ENCODE measurements at regions of chr1 and their contacts with region 1.

Region 1: GRCh38 chr1:175742790-175743459 is 470 bp downstream of the TNR start:
- DNase-seq: peak in 1 of 2 experiments; percentile 59
- H3K4me3 ChIP-seq: peak overlapping the region; percentile 12 to 31 (median 18); a peak in 6 of 8 replicates
- H3K27ac ChIP-seq: no peak overlapping the region
- H3K4me1 ChIP-seq: peaks cover 0 to 7% (median 3%) of the 10 kb centered on the region in 4 experiments; a peak in 3 of 7 replicates
- H3K27me3 ChIP-seq: peaks cover 0 to 6% (median 0%) of the 10 kb centered on the region in 4 experiments; a peak in 2 of 7 replicates
- CTCF ChIP-seq: no peak
- EP300 ChIP-seq: no peak
- POLR2A ChIP-seq: no peak
- RAD21 ChIP-seq: peak in 1 of 2 experiments; percentile 31; a peak in 1 of 4 replicates

Region 2: DNA sequence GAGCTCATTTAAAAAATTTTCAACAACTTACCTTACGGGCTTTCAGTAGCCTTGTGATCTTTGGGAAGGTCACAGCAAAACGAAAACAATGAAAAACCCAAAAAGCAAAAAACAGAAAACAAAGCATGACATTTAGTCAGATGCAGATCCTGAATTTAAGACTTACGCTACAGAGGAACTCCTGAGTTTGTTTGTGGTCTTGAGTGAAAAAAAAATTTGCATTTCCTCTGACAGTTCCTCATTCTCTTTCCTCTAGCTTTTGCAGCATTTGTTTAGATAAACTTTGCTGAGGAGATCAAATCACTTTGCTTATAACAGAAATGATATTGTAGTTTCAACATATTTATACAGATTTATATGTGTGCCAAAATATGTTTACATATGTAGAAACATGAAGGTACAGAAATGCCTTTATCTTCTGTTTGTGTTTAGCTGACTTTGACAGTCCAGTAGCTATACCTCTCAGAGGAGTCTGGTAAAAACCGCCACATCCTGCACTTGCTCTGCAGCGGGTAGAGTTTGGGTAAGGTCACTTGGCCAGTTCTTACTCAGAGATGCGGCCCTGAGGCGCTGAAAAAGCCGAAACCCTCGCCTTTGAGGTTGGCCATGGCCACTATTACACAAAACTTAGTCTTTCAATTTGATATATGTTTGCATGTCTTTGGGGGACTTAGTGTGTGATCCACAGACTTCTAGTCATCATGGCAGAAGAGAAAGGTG is 142.0 kb before region 1 on chr1:
- CTCF ChIA-PET with region 1: interaction called, 12 read pairs
- POLR2A ChIA-PET with region 1: no interaction called
- DNase-seq: no peak
- H3K4me3 ChIP-seq: no peak overlapping the region
- H3K27ac ChIP-seq: no peak overlapping the region
- H3K4me1 ChIP-seq: peaks cover 0 to 3% (median 2%) of the 10 kb centered on the region in 4 experiments; a peak in 4 of 7 replicates
- H3K27me3 ChIP-seq: peaks cover 2 to 20% (median 13%) of the 10 kb centered on the region in 4 experiments
- CTCF ChIP-seq: no peak
- EP300 ChIP-seq: no peak
- POLR2A ChIP-seq: no peak
- RAD21 ChIP-seq: no peak

Region 3: GRCh38 chr1:175673371-175674150 is 69.4 kb before region 1 on chr1:
- CTCF ChIA-PET with region 1: interaction called, 17 read pairs
- POLR2A ChIA-PET with region 1: no interaction called
- DNase-seq: no peak
- H3K4me3 ChIP-seq: no peak overlapping the region
- H3K27ac ChIP-seq: no peak overlapping the region
- H3K4me1 ChIP-seq: peaks cover 0 to 3% (median 0%) of the 10 kb centered on the region in 4 experiments; a peak in 2 of 7 replicates
- H3K27me3 ChIP-seq: no peaks in the 10 kb centered on the region; a peak in 1 of 7 replicates
- CTCF ChIP-seq: no peak
- EP300 ChIP-seq: no peak
- POLR2A ChIP-seq: no peak
- RAD21 ChIP-seq: no peak

Region 4: GRCh38 chr1:175717610-175718540 is 25.1 kb before region 1 on chr1:
- CTCF ChIA-PET with region 1: interaction called, 44 read pairs
- POLR2A ChIA-PET with region 1: no interaction called
- DNase-seq: no peak
- H3K4me3 ChIP-seq: no peak overlapping the region
- H3K27ac ChIP-seq: no peak overlapping the region
- H3K4me1 ChIP-seq: peaks cover 0 to 2% (median 0%) of the 10 kb centered on the region in 4 experiments; a peak in 2 of 7 replicates
- H3K27me3 ChIP-seq: no peaks in the 10 kb centered on the region; a peak in 2 of 7 replicates
- CTCF ChIP-seq: no peak
- EP300 ChIP-seq: no peak
- POLR2A ChIP-seq: no peak
- RAD21 ChIP-seq: no peak

Region 5: GRCh38 chr1:175768610-175769009 is 25.7 kb after region 1 on chr1:
- CTCF ChIA-PET with region 1: interaction called, 277 read pairs
- POLR2A ChIA-PET with region 1: no interaction called
- DNase-seq: no peak
- H3K4me3 ChIP-seq: no peak overlapping the region
- H3K27ac ChIP-seq: no peak overlapping the region
- H3K4me1 ChIP-seq: no peaks in the 10 kb centered on the region
- H3K27me3 ChIP-seq: no peaks in the 10 kb centered on the region; a peak in 1 of 7 replicates
- CTCF ChIP-seq: no peak
- EP300 ChIP-seq: no peak
- POLR2A ChIP-seq: no peak
- RAD21 ChIP-seq: no peak

Region 6: DNA sequence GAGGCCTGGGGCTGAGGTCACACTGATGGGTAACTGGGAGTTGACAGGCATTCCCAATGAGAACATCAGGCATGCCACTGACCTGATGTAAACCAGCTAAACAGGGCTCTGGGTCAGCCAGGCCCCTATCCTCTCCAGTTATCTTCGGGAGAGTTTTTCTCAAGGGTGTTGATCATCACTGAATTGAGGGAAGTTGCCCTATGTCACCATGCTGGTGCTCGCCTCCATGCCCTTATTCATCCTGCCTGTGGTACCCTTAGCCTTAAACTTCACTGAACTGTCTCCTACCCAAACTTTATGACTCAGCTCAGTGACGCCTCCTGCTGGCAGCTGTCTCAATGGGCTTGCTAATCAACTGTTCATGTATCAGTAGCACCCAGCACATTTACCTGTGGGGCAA is 81.2 kb after region 1 on chr1:
- CTCF ChIA-PET with region 1: interaction called, 32 read pairs
- POLR2A ChIA-PET with region 1: no interaction called
- DNase-seq: peak; percentile 50 to 90
- H3K4me3 ChIP-seq: no peak overlapping the region
- H3K27ac ChIP-seq: no peak overlapping the region
- H3K4me1 ChIP-seq: peaks cover 0 to 1% (median 0%) of the 10 kb centered on the region in 4 experiments; a peak in 1 of 7 replicates
- H3K27me3 ChIP-seq: no peaks in the 10 kb centered on the region
- CTCF ChIP-seq: peak; percentile 61 to 92 (median 83)
- EP300 ChIP-seq: no peak
- POLR2A ChIP-seq: no peak
- RAD21 ChIP-seq: peak; percentile 83 to 89

Region 7: GRCh38 chr1:175887981-175888433 is 145.1 kb after region 1 on chr1:
- CTCF ChIA-PET with region 1: interaction called, 69 read pairs
- POLR2A ChIA-PET with region 1: interaction called, 3 read pairs
- DNase-seq: peak; percentile 68 to 89
- H3K4me3 ChIP-seq: peak overlapping the region; percentile 1 to 50 (median 28); a peak in 6 of 8 replicates
- H3K27ac ChIP-seq: no peak overlapping the region
- H3K4me1 ChIP-seq: peaks cover 0 to 7% (median 5%) of the 10 kb centered on the region in 4 experiments; a peak in 5 of 7 replicates
- H3K27me3 ChIP-seq: peaks cover 18 to 49% (median 44%) of the 10 kb centered on the region in 4 experiments
- CTCF ChIP-seq: peak; percentile 87 to 94 (median 92)
- EP300 ChIP-seq: peak in 1 of 2 experiments; percentile 40; a peak in 1 of 3 replicates
- POLR2A ChIP-seq: no peak
- RAD21 ChIP-seq: peak; percentile 89 to 93

Region 8: GRCh38 chr1:175960169-175960568 is 217.2 kb after region 1 on chr1:
- CTCF ChIA-PET with region 1: no interaction called
- POLR2A ChIA-PET with region 1: no interaction called
- DNase-seq: no peak
- H3K4me3 ChIP-seq: no peak overlapping the region
- H3K27ac ChIP-seq: no peak overlapping the region
- H3K4me1 ChIP-seq: no peaks in the 10 kb centered on the region
- H3K27me3 ChIP-seq: no peaks in the 10 kb centered on the region
- CTCF ChIP-seq: no peak
- EP300 ChIP-seq: no peak
- POLR2A ChIP-seq: no peak
- RAD21 ChIP-seq: no peak

Region 9: DNA sequence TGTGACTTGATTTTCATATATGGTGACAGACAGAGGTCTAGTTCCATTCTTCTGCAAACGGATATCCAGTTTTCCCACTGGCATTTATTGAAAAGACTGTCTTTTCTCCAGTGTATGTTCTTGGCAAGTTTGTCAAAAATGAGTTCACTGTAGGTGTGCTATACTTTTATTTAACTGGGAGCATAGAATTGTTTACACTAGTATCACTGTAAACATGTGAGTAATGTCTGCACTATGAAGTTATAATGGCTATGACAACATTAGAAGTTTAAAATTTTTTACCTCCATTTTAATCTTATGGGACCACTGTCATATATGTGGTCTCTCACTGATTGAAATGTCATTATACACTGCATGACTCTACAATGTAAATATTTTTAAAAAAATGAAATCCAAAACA is 257.3 kb after region 1 on chr1:
- CTCF ChIA-PET with region 1: no interaction called
- POLR2A ChIA-PET with region 1: no interaction called
- DNase-seq: no peak
- H3K4me3 ChIP-seq: no peak overlapping the region
- H3K27ac ChIP-seq: no peak overlapping the region
- H3K4me1 ChIP-seq: no peaks in the 10 kb centered on the region
- H3K27me3 ChIP-seq: no peaks in the 10 kb centered on the region
- CTCF ChIP-seq: no peak
- EP300 ChIP-seq: no peak
- POLR2A ChIP-seq: no peak
- RAD21 ChIP-seq: no peak